ENCODE measurements at regions of chr3 and their contacts with region 1.

Region 1: DNA sequence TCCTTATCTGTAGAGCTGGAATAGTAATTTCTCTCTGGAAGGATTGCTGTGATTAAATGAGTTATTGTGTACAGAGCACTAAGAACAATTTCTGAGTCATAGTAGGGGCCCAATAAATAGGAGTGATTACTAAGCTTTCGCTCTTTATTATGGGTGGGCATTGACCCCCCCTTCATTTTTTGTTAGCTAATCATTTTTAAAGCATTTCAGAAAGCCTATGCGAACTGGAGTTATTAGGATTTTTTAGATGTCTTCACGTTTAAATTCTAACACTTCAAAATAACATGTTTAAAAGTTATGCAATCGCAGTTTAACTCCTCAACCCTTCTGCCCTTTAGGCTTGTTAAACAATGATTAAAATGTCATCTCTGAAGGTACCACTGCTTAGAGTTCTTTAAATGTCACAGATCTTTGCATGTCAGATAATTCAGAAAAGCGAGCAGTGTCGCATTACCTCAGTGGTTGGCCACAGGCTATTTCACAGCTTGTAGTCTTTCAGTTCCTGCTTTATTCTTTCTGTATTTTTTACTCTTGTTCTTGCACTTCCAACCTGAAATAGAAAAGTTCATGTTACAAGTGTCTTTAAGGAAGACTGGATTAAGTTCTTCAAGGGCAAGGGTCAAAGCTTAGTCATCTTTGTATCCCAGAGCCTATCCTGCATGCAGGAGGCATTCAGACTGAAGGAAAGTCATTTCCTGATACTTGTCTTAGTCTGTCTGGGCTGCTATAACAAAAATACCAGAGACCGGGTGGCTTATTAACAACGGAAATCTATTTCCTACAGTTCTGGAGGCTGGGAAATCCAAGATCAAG is 102.9 kb downstream of the FNDC3B start:
- DNase-seq: peak; percentile 43
- H3K4me3 Mint-ChIP-seq: peak overlapping the region; percentile 36
- H3K27ac Mint-ChIP-seq: peak overlapping the region; percentile 86
- H3K4me1 Mint-ChIP-seq: peaks cover 76% of the 10 kb centered on the region
- H3K27me3 Mint-ChIP-seq: no peaks in the 10 kb centered on the region
- CTCF ChIP-seq: no peak

Region 2: GRCh38 chr3:171514466-171514865 is 627.8 kb before region 1 on chr3:
- CTCF ChIA-PET with region 1: no interaction called
- intact Hi-C with region 1: no loop called
- DNase-seq: no peak
- H3K4me3 Mint-ChIP-seq: no peak overlapping the region
- H3K27ac Mint-ChIP-seq: no peak overlapping the region
- H3K4me1 Mint-ChIP-seq: peaks cover 10% of the 10 kb centered on the region
- H3K27me3 Mint-ChIP-seq: no peaks in the 10 kb centered on the region
- CTCF ChIP-seq: peak; percentile 28

Region 3: DNA sequence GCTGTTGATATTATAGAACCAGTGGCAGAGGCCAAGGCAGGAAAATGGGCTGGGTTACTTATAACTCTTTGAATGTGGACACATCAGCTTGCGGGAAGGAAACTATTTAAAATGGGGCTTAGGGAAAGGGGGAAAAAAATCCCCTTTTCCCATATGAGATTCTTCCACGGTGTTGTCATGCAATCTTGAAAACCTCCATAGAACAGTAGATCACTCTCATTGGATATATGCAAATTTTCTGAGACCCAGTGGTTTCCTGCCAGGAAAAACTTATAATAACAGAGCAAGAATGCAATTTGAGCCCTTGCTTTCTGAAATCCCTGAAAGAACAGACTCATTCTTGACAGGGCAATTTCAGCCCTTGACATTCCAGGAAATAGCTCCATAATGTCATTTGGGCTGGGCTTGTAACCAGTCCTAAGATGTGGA is 268.0 kb before region 1 on chr3:
- CTCF ChIA-PET with region 1: no interaction called
- intact Hi-C with region 1: loop called (anchors 2 kb)
- DNase-seq: peak; percentile 69
- H3K4me3 Mint-ChIP-seq: peak overlapping the region; percentile 36
- H3K27ac Mint-ChIP-seq: peak overlapping the region; percentile 97
- H3K4me1 Mint-ChIP-seq: peaks cover 74% of the 10 kb centered on the region
- H3K27me3 Mint-ChIP-seq: no peaks in the 10 kb centered on the region
- CTCF ChIP-seq: no peak

Region 4: GRCh38 chr3:171950373-171950772 is 191.9 kb before region 1 on chr3:
- CTCF ChIA-PET with region 1: interaction called, 3 read pairs
- intact Hi-C with region 1: loop called (anchors 5 kb)
- DNase-seq: no peak
- H3K4me3 Mint-ChIP-seq: no peak overlapping the region
- H3K27ac Mint-ChIP-seq: peak overlapping the region; percentile 81
- H3K4me1 Mint-ChIP-seq: peaks cover 59% of the 10 kb centered on the region
- H3K27me3 Mint-ChIP-seq: no peaks in the 10 kb centered on the region
- CTCF ChIP-seq: no peak

Region 5: GRCh38 chr3:172153335-172153861 is 11.1 kb after region 1 on chr3:
- CTCF ChIA-PET with region 1: interaction called, 19 read pairs
- intact Hi-C with region 1: loop called (anchors 1 kb)
- DNase-seq: peak; percentile 98
- H3K4me3 Mint-ChIP-seq: peak overlapping the region; percentile 56
- H3K27ac Mint-ChIP-seq: peak overlapping the region; percentile 99
- H3K4me1 Mint-ChIP-seq: peaks cover 84% of the 10 kb centered on the region
- H3K27me3 Mint-ChIP-seq: no peaks in the 10 kb centered on the region
- CTCF ChIP-seq: no peak

Region 6: DNA sequence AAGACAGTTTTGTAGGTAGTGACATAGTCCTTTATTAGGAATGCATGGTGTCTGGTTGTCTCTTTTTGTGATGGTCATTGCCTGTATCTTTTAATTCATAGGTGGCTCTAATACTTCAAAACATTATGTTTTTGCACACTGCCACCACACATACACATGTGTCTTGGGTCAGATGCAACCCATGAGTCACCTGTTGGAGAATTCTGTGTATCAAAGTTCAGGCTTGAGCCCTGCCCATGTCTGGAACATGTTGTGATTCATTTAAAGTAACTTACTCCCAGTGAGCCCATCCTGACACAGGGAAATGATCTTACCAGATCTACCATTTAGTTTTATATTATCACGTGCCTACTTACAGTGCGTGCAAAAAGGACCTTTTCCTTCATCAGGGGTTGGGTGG is 163.3 kb after region 1 on chr3:
- CTCF ChIA-PET with region 1: no interaction called
- intact Hi-C with region 1: loop called (anchors 5 kb)
- DNase-seq: peak; percentile 66
- H3K4me3 Mint-ChIP-seq: peak overlapping the region; percentile 3
- H3K27ac Mint-ChIP-seq: peak overlapping the region; percentile 62
- H3K4me1 Mint-ChIP-seq: peaks cover 45% of the 10 kb centered on the region
- H3K27me3 Mint-ChIP-seq: no peaks in the 10 kb centered on the region
- CTCF ChIP-seq: no peak

Measured in Calu3 (cell line).